ENCODE measurements at regions of chr1 and their contacts with region 1.

Region 1: DNA sequence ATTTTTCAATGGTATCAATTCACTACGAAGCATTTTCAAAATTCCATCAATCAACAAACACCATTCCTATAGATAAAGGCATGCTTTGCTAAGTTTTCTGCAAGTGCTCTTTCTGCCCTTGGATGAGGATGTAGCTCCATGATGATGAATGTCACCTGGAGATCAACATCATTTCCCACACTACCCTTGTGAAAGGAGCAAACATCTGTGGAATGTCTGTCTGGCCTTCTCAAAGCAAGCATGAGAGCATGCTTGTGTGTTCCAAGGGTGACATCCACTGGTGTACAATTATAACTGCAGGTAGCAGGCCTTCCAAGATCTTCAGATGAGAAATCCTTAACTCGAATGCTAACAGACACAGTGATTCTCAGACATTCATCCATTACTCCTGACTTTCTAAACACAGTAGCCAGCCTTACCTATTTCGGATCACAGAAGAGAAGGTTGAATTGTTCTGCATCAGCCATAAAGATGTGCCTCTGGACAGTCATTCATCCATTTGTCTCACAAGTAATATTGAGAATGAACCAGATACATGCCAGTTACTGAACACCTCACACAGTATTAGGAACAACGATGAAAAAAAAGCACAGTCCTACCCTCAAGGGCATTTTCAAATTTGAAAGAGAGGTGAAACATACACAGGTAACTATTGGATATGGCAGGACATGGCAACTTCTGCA is 162.4 kb downstream of the TPR start:
- DNase-seq: peak in 1 of 2 donors; percentile 91
- H3K4me3 ChIP-seq: no peak overlapping the region
- H3K27ac ChIP-seq: no peak overlapping the region
- H3K4me1 ChIP-seq: no peaks in the 10 kb centered on the region
- H3K27me3 ChIP-seq: no peaks in the 10 kb centered on the region
- CTCF ChIP-seq: peak in 5 of 7 experiments; percentile 48 to 84 (median 68)
- EP300 ChIP-seq: no peak
- POLR2A ChIP-seq: no peak

Region 2: GRCh38 chr1:185720633-185721272 is 491.9 kb before region 1 on chr1:
- intact Hi-C with region 1: loop called (anchors 5 kb)
- DNase-seq: peak in 1 of 2 donors; percentile 73
- H3K4me3 ChIP-seq: no peak overlapping the region
- H3K27ac ChIP-seq: no peak overlapping the region
- H3K4me1 ChIP-seq: peaks cover 0 to 6% (median 0%) of the 10 kb centered on the region in 4 donors
- H3K27me3 ChIP-seq: no peaks in the 10 kb centered on the region
- CTCF ChIP-seq: peak in 5 of 7 experiments; percentile 6 to 49 (median 37)
- EP300 ChIP-seq: no peak
- POLR2A ChIP-seq: no peak

Measured in stomach (tissue), 19 donors.